Esophagus squamous epithelium (tissue), 5 donors: ENCODE measurements at regions of chr1 and their contacts with region 1.

Region 1: DNA sequence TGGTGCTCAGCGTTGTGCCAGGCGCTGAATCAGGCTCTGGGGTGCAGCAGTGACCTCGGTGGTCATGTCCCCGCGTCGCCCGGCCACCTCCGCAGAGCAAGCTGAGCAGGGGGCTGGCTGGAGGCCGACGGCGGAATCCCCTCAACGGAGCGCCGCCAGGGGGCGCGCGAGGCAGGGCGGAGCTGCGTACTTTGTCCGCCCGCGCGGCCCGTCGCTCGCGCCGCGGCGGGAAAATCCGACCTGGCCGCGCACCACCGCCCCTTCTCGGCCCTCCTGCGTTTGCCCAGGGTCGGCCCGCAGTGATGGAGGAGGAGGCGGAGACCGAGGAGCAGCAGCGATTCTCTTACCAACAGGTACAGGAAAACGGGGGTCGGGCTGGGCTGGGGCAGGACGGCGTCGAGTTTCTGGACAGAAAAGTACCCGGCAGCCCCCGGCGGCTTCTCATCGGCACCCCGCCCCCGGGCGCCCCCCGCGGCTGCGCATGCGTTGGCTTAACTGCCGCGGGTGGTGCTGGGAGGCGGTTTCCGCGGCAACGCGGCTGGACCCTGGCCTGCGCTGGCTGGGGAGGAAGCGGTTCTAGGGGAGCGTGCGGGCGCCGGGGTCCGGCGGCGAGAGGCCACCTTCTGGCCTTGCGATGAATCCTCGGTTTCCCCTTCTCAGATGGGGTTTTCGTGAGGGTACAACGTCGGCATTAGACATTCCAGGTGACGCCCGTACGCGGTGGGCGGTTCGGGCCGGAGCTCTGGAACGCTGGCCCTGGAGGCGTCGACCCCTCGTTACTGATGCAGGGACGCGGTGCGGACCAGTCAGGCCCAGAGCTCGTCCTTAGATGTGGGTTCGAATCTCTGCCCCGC is at the start of gene CENPS:
- DNase-seq: no peak
- H3K4me3 ChIP-seq: peak within 1 kb of the TSS; percentile 52 to 78 (median 68)
- H3K27ac ChIP-seq: peak within 1 kb of the TSS; percentile 43 to 77 (median 64)
- H3K4me1 ChIP-seq: peaks cover 8 to 32% (median 13%) of the 10 kb centered on the region in 3 donors
- H3K27me3 ChIP-seq: no peaks in the 10 kb centered on the region
- CTCF ChIP-seq: peak; percentile 96 to 99 (median 98)
- POLR2A ChIP-seq: peak in 2 of 4 donors; percentile 6 to 23
- total RNA-seq, gene CENPS: 5.6 to 15.7 (median 6.1) TPM

Region 2: DNA sequence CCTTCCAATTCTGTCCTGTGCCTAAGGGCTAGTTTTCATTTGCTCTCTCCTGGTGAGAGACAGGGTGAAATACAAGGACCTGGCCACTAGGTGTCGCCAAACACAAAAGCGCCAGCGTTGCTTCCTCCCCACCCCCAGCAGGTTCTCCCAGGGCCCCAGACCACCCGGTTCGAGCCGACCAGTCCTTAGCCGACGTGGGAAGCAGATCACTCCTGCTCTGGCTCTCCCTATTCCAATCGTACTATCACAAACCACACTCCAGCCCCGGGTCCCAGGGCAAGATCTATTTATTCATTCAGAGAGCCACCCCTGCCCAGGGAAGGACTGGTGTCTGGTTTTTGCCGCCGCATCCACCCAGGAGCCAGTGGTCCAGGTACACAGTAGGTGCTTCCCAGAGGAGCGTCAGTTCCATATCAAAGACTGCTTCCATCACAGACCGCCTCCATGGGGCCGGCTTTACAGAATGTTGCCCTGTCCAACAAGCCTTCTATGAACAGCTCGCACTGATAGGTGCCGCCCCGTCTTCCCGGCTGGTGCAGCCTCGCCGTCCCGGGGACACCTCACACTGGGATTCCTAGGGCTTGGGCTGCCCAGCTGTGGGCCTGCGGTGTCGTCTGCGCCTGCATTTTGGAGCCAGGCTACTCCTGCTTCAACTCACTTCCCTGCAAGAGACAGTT is 555.3 kb before region 1 on chr1:
- intact Hi-C with region 1: no loop called
- DNase-seq: no peak
- H3K4me3 ChIP-seq: peak overlapping the region in 3 of 4 donors; percentile 19 to 46 (median 24)
- H3K27ac ChIP-seq: peak overlapping the region; percentile 32 to 89 (median 64)
- H3K4me1 ChIP-seq: peaks cover 37 to 94% (median 46%) of the 10 kb centered on the region in 3 donors
- H3K27me3 ChIP-seq: no peaks in the 10 kb centered on the region
- CTCF ChIP-seq: peak; percentile 88 to 97 (median 96)
- POLR2A ChIP-seq: no peak

Region 3: GRCh38 chr1:10209905-10210810 is 220.3 kb before region 1 on chr1 and contains the start of gene KIF1B:
- intact Hi-C with region 1: loop called (anchors 10 kb)
- DNase-seq: peak; percentile 84
- H3K4me3 ChIP-seq: peak within 1 kb of the TSS; percentile 89 to 96 (median 90)
- H3K27ac ChIP-seq: peak within 1 kb of the TSS; percentile 94 to 100 (median 100)
- H3K4me1 ChIP-seq: peaks cover 5 to 45% (median 17%) of the 10 kb centered on the region in 3 donors
- H3K27me3 ChIP-seq: no peaks in the 10 kb centered on the region
- CTCF ChIP-seq: peak; percentile 95 to 99 (median 98)
- POLR2A ChIP-seq: peak in 3 of 4 donors; percentile 96 to 99 (median 98)
- total RNA-seq, gene KIF1B: 27.1 to 40.6 (median 38.1) TPM

Region 4: GRCh38 chr1:10368194-10368593 is 62.2 kb before region 1 on chr1:
- intact Hi-C with region 1: no loop called
- DNase-seq: no peak
- H3K4me3 ChIP-seq: no peak overlapping the region
- H3K27ac ChIP-seq: no peak overlapping the region
- H3K4me1 ChIP-seq: no peaks in the 10 kb centered on the region
- H3K27me3 ChIP-seq: no peaks in the 10 kb centered on the region
- CTCF ChIP-seq: no peak
- POLR2A ChIP-seq: no peak

Region 5: GRCh38 chr1:10378081-10378841 is 52.2 kb before region 1 on chr1:
- intact Hi-C with region 1: loop called (anchors 2 kb)
- DNase-seq: no peak
- H3K4me3 ChIP-seq: no peak overlapping the region
- H3K27ac ChIP-seq: peak overlapping the region; percentile 79 to 90 (median 82)
- H3K4me1 ChIP-seq: peaks cover 10 to 44% (median 18%) of the 10 kb centered on the region in 3 donors
- H3K27me3 ChIP-seq: no peaks in the 10 kb centered on the region
- CTCF ChIP-seq: peak in 1 of 6 experiments; percentile 5
- POLR2A ChIP-seq: no peak

Region 6: GRCh38 chr1:10494754-10495474 is 64.5 kb after region 1 on chr1:
- intact Hi-C with region 1: loop called (anchors 5 kb)
- DNase-seq: no peak
- H3K4me3 ChIP-seq: peak overlapping the region in 3 of 4 donors; percentile 25 to 51 (median 26)
- H3K27ac ChIP-seq: peak overlapping the region; percentile 88 to 94 (median 92)
- H3K4me1 ChIP-seq: peaks cover 11 to 34% (median 20%) of the 10 kb centered on the region in 3 donors
- H3K27me3 ChIP-seq: no peaks in the 10 kb centered on the region
- CTCF ChIP-seq: peak; percentile 80 to 97 (median 96)
- POLR2A ChIP-seq: no peak

Region 7: GRCh38 chr1:10663678-10664035 is 233.2 kb after region 1 on chr1:
- intact Hi-C with region 1: no loop called
- DNase-seq: no peak
- H3K4me3 ChIP-seq: peak overlapping the region in 1 of 4 donors; percentile 33
- H3K27ac ChIP-seq: peak overlapping the region; percentile 46 to 82 (median 74)
- H3K4me1 ChIP-seq: peaks cover 2 to 56% (median 11%) of the 10 kb centered on the region in 3 donors
- H3K27me3 ChIP-seq: no peaks in the 10 kb centered on the region
- CTCF ChIP-seq: no peak
- POLR2A ChIP-seq: peak in 1 of 4 donors; percentile 46